ENCODE measurements at regions of chr1 and their contacts with region 1.

Region 1: DNA sequence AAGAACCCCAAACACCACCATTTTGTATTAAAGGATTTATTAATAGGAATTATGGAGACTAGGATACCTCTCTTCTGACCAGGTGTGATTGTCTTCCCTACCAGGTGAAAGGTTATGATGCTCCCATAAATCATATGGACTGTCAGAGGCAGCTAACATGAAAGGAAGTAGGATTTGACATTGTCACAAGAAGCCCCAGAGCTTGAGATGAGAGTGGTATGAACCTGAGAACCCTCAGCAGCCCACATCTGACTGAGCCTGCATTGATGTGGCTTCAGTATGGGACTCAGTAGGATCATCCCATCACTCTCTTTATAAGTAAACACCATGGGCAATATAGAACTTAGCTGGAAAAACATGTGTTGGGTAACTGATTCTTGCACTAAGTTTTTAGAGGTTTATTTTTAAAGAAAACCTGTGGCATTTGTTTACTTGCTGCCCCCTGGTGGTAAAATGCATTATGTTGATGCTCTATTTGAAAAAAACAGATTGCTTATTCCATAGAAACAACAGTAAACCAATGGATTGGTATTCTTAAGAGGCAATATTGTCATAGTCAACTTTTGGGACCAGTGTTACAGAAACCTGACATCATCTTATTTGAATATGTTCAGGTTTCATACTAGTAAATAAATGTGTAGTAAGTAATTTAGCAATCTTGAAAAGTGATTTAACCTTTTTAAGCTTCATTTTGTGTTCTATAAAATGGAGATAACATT is 16.6 kb upstream of the CACYBP start:
- DNase-seq: peak; percentile 66
- H3K4me3 ChIP-seq: no peak overlapping the region
- H3K27ac ChIP-seq: no peak overlapping the region
- H3K4me1 ChIP-seq: no peaks in the 10 kb centered on the region
- H3K27me3 ChIP-seq: no peaks in the 10 kb centered on the region
- CTCF ChIP-seq: peak; percentile 44 to 49
- POLR2A ChIP-seq: no peak

Region 2: GRCh38 chr1:174713796-174714195 is 269.3 kb before region 1 on chr1:
- CTCF ChIA-PET with region 1: no interaction called
- POLR2A ChIA-PET with region 1: no interaction called
- dilution Hi-C with region 1: no loop called
- intact Hi-C with region 1: no loop called
- DNase-seq: peak; percentile 39
- H3K4me3 ChIP-seq: no peak overlapping the region
- H3K27ac ChIP-seq: no peak overlapping the region
- H3K4me1 ChIP-seq: no peaks in the 10 kb centered on the region
- H3K27me3 ChIP-seq: no peaks in the 10 kb centered on the region
- CTCF ChIP-seq: no peak
- POLR2A ChIP-seq: no peak

Region 3: DNA sequence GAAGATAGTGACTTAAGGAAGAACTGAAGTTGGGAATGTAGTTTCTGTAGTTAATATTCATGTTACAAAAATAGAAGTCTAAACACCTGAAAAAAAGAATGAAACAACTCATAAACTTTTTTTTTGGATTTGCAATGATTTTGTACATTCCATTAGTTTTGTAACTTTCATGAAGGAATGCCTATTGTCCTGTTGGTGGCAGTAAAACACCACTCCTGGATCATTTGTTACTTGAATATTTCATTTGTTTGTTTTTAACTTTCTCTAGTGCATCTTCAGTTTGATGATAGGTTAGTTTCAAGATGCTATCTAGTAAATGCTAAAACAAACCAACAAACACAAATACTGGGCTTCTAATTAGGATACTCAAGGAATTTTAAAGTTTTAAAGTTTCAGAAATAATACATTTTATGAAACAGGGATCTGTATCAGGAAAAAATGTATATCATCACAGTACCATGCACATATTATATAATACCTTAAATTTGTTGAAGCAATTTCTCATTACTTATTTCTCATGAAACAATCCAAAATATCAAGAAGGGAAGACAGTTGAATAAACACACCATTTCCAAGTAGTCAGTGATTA is 213.1 kb before region 1 on chr1:
- CTCF ChIA-PET with region 1: interaction called, 107 read pairs
- POLR2A ChIA-PET with region 1: no interaction called
- dilution Hi-C with region 1: no loop called
- intact Hi-C with region 1: loop called (anchors 1 kb)
- DNase-seq: peak; percentile 51
- H3K4me3 ChIP-seq: no peak overlapping the region
- H3K27ac ChIP-seq: no peak overlapping the region
- H3K4me1 ChIP-seq: no peaks in the 10 kb centered on the region
- H3K27me3 ChIP-seq: no peaks in the 10 kb centered on the region
- CTCF ChIP-seq: peak; percentile 48 to 50
- POLR2A ChIP-seq: no peak

Region 4: DNA sequence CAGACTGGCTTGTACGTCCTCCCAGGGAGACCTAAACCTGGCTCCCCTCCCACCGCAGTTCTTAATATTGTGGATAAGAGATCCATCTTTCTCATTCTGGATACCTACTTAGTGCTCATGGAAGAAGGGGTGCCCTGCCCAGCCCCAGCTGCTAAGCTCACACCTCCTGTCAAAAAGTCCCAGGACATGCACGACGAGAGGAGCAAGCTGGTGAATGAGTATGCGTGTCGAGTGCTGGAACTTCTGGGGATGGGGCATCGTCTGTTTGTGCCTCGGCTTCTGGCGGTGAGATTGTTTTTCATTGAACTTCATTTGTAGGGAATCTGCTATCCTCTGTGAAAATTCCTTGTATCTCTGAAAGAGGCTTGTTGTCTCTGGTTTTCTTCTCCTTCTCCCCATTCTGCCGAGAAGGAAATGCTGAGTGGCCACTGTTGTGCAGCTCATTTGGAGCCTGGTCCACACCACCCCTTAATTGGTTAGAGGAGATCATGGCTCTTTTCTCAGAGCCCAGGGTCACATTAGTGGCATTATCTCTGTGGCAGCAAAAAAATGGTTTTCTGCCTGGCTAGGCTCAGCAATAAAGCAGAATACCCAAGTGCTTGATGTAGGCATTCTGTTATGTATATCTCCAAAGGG is 182.8 kb before region 1 on chr1:
- CTCF ChIA-PET with region 1: interaction called, 14 read pairs
- POLR2A ChIA-PET with region 1: no interaction called
- dilution Hi-C with region 1: no loop called
- intact Hi-C with region 1: no loop called
- DNase-seq: no peak
- H3K4me3 ChIP-seq: peak overlapping the region; percentile 23 to 82 (median 34)
- H3K27ac ChIP-seq: no peak overlapping the region
- H3K4me1 ChIP-seq: peaks cover 10% of the 10 kb centered on the region
- H3K27me3 ChIP-seq: no peaks in the 10 kb centered on the region
- CTCF ChIP-seq: no peak
- POLR2A ChIP-seq: no peak

Region 5: DNA sequence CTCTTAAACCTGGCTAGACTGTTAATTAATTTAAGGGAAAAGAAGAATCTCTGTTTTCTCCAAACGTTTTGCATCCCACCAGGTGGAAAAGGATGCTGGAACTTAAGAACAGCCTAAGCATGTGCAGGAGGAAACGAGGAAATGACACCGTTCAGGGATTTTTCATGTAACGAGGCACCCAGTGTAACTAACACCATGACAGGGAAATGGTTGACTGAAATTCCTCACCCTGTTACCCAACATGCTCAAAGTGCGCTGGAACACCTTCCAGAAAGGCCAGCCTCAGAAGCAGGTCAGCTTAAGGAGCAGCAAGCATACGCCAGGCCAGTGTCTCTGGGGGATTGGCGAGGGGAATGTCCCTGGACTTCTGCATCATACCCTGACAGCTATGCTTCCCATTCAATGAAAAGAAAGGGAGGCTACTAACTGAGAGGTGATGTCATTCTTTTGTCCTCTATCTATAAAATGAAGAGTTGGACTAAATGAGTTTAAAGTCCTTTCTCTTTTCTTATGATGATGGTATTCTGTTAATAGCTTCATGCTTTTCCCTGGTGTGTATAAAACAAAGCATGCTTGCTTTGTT is 106.1 kb after region 1 on chr1:
- CTCF ChIA-PET with region 1: no interaction called
- POLR2A ChIA-PET with region 1: no interaction called
- dilution Hi-C with region 1: no loop called
- intact Hi-C with region 1: no loop called
- DNase-seq: no peak
- H3K4me3 ChIP-seq: no peak overlapping the region
- H3K27ac ChIP-seq: no peak overlapping the region
- H3K4me1 ChIP-seq: no peaks in the 10 kb centered on the region
- H3K27me3 ChIP-seq: no peaks in the 10 kb centered on the region
- CTCF ChIP-seq: no peak
- POLR2A ChIP-seq: no peak

Measured in endothelial cell of umbilical vein (primary cell).